ENCODE measurements at regions of chr13 and their contacts with region 1.

Region 1: GRCh38 chr13:102197193-102197592 is 204.7 kb downstream of the FGF14 start:
- DNase-seq: peak; percentile 29
- ATAC-seq: peak; percentile 98
- H3K4me3 Mint-ChIP-seq: no peak overlapping the region
- H3K27ac Mint-ChIP-seq: no peak overlapping the region; the same call in 1 of the 2 replicates
- H3K4me1 Mint-ChIP-seq: peaks cover 11% of the 10 kb centered on the region
- H3K27me3 Mint-ChIP-seq: no peaks in the 10 kb centered on the region
- CTCF ChIP-seq: no peak

Region 2: GRCh38 chr13:102170295-102170694 is 26.9 kb before region 1 on chr13:
- CTCF ChIA-PET with region 1: no interaction called
- POLR2A ChIA-PET with region 1: no interaction called
- DNase-seq: no peak
- ATAC-seq: peak; percentile 53; the same call in 1 of the 2 replicates
- H3K4me3 Mint-ChIP-seq: no peak overlapping the region
- H3K27ac Mint-ChIP-seq: no peak overlapping the region
- H3K4me1 Mint-ChIP-seq: peaks cover 14% of the 10 kb centered on the region
- H3K27me3 Mint-ChIP-seq: no peaks in the 10 kb centered on the region; the same call in 1 of the 2 replicates
- CTCF ChIP-seq: no peak

Region 3: GRCh38 chr13:102394158-102395053 is 197.2 kb after region 1 on chr13:
- CTCF ChIA-PET with region 1: interaction called, 11 read pairs
- POLR2A ChIA-PET with region 1: no interaction called
- DNase-seq: peak; percentile 97
- ATAC-seq: peak; percentile 88
- H3K4me3 Mint-ChIP-seq: peak overlapping the region; percentile 89
- H3K27ac Mint-ChIP-seq: peak overlapping the region; percentile 90
- H3K4me1 Mint-ChIP-seq: peaks cover 14% of the 10 kb centered on the region
- H3K27me3 Mint-ChIP-seq: peaks cover 19% of the 10 kb centered on the region
- CTCF ChIP-seq: no peak

Region 4: DNA sequence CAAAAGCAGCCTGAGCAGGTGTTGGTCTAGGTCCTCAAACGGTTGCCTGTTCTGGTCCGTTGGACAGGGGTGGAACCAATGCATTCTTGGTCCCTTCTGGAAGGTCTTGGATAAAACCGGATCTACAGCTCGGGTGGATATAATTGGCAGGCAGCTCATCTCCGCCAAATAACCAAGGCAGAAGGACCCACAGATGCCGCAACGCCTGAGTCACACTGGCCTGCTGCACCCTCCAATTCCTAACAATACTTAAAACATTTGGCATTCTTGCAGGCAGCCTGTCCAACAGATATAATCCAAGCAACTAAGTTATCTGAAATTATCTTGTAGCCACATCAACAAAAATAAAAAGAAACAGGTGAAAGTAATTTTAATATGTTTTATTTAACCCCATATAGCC is 263.6 kb after region 1 on chr13:
- CTCF ChIA-PET with region 1: interaction called, 10 read pairs
- POLR2A ChIA-PET with region 1: no interaction called
- DNase-seq: no peak
- ATAC-seq: no peak
- H3K4me3 Mint-ChIP-seq: no peak overlapping the region
- H3K27ac Mint-ChIP-seq: no peak overlapping the region
- H3K4me1 Mint-ChIP-seq: no peaks in the 10 kb centered on the region; the same call in 1 of the 2 replicates
- H3K27me3 Mint-ChIP-seq: no peaks in the 10 kb centered on the region
- CTCF ChIP-seq: no peak

Region 5: DNA sequence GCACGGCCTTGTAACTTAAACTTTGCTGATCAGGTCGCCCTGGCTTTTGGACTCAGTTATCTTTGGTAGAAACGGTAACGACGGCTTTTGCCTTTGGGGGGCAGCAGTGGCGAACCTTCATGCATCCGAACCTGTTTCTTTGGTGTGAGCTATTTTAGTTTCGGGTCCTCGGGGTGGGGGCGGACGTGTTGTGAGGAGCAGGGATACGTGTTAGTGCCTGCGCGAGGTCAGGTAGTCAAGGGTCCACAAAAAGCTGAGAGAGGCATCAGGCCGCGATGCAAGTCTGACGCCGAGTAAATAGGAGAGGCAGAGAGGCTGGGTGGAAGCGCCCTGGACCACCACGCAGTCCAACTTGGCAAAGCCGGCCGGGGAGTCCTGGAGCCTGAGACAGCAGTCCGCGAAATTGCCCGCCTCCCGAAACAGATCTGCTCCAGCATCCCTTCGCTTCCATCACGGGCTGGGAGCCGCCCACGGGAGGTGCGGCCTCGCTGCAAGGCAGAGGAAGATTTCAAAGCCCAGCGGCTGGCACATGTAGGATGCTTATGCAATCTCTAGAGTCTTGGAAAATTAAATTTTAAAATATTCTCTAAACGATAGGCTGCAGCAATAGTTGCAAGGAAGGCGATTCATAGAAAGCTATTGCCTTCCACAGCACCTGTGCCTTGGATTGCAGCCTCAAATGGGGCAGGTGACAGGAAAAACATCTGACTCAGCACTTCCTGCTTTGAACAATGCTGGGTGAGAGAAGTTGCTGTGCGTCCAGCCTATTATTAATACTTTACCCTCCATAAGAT is 395.0 kb after region 1 on chr13:
- CTCF ChIA-PET with region 1: no interaction called
- POLR2A ChIA-PET with region 1: no interaction called
- DNase-seq: peak; percentile 87
- ATAC-seq: peak; percentile 50
- H3K4me3 Mint-ChIP-seq: peak overlapping the region; percentile 88
- H3K27ac Mint-ChIP-seq: peak overlapping the region; percentile 99
- H3K4me1 Mint-ChIP-seq: peaks cover 18% of the 10 kb centered on the region
- H3K27me3 Mint-ChIP-seq: no peaks in the 10 kb centered on the region
- CTCF ChIP-seq: no peak

Measured in WTC11 (cell line).